B cell (primary cell): ENCODE measurements at regions of chr3 and their contacts with region 1.

Region 1: GRCh38 chr3:152183473-152183872 is 85.3 kb upstream of the MBNL1 start:
- DNase-seq: peak; percentile 76
- ATAC-seq: peak; percentile 80
- H3K4me3 ChIP-seq: peak overlapping the region in 1 of 5 experiments; percentile 11
- H3K4me3 Mint-ChIP-seq: no peak overlapping the region
- H3K27ac ChIP-seq: no peak overlapping the region
- H3K27ac Mint-ChIP-seq: peak overlapping the region; percentile 62
- H3K4me1 ChIP-seq: peaks cover 5 to 9% of the 10 kb centered on the region in 2 donors
- H3K4me1 Mint-ChIP-seq: peaks cover 24% of the 10 kb centered on the region
- H3K27me3 ChIP-seq: no peaks in the 10 kb centered on the region
- H3K27me3 Mint-ChIP-seq: no peaks in the 10 kb centered on the region
- CTCF ChIP-seq: peak; percentile 81

Region 2: DNA sequence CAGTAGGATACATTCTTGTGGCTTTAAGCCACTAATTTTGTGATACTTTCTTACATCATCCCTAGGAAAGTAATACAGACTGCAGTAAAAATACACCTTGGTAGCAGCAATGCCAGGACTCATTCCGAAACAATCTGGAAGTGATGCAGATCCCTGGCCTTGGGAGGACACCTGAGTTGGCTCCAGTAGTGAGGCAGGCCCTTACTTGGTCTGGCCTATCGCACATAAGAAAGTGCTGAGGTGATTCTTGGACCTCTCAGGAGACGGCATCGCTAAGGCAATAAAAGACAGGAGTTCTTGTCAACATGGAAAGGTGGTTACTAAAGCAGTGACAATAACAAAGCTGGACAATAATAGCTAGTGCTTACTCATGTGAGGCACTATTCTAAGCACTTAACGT is 183.5 kb before region 1 on chr3:
- CTCF ChIA-PET with region 1: no interaction called
- POLR2A ChIA-PET with region 1: no interaction called
- intact Hi-C with region 1: no loop called
- DNase-seq: no peak
- ATAC-seq: no peak
- H3K4me3 ChIP-seq: no peak overlapping the region
- H3K4me3 Mint-ChIP-seq: no peak overlapping the region
- H3K27ac ChIP-seq: no peak overlapping the region
- H3K27ac Mint-ChIP-seq: no peak overlapping the region
- H3K4me1 ChIP-seq: no peaks in the 10 kb centered on the region
- H3K4me1 Mint-ChIP-seq: no peaks in the 10 kb centered on the region
- H3K27me3 ChIP-seq: no peaks in the 10 kb centered on the region
- H3K27me3 Mint-ChIP-seq: peaks cover 12% of the 10 kb centered on the region
- CTCF ChIP-seq: no peak

Region 3: DNA sequence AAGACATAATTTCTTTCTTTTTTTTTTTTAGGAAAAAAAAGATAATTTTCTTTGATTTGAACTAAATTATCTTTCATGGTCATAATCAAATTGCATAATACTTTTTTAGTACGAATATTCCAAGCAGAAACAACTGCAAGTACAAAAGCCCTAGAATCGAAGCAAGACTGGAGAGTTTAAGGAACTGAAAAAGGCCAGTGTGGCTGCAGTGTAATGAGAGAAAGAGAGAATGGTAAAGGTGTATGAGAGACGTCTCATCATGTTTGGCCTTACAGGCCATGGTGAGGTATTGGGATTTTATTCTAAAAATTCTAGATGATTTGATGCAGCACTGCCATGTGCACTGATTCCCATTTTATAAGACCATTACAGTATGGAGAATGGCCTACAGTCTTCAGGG is 129.2 kb before region 1 on chr3:
- CTCF ChIA-PET with region 1: no interaction called
- POLR2A ChIA-PET with region 1: no interaction called
- intact Hi-C with region 1: no loop called
- DNase-seq: no peak
- ATAC-seq: no peak
- H3K4me3 ChIP-seq: no peak overlapping the region
- H3K4me3 Mint-ChIP-seq: no peak overlapping the region
- H3K27ac ChIP-seq: no peak overlapping the region
- H3K27ac Mint-ChIP-seq: no peak overlapping the region
- H3K4me1 ChIP-seq: no peaks in the 10 kb centered on the region
- H3K4me1 Mint-ChIP-seq: no peaks in the 10 kb centered on the region
- H3K27me3 ChIP-seq: no peaks in the 10 kb centered on the region
- H3K27me3 Mint-ChIP-seq: peaks cover 3% of the 10 kb centered on the region
- CTCF ChIP-seq: no peak

Region 4: DNA sequence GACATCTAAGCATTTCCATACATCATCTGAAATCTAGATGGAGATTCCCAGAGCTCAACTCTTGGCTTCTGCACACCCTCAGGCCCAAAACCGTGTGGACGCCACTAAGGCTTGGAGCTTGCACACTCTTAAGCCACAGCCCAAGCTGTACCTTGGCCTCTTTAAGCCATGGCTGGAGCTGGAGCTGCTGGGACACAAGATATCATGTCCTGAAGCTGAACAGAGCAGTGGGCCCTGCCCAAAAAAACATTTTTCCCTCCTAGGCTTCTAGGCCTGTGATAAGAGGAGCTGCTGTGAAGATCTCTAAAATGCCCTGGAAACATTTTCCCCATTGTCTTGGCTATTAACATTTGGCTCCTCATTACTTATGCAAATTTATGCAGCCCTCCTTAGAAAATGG is 103.5 kb before region 1 on chr3:
- CTCF ChIA-PET with region 1: no interaction called
- POLR2A ChIA-PET with region 1: no interaction called
- intact Hi-C with region 1: no loop called
- DNase-seq: no peak
- ATAC-seq: no peak
- H3K4me3 ChIP-seq: no peak overlapping the region
- H3K4me3 Mint-ChIP-seq: no peak overlapping the region
- H3K27ac ChIP-seq: no peak overlapping the region
- H3K27ac Mint-ChIP-seq: no peak overlapping the region
- H3K4me1 ChIP-seq: no peaks in the 10 kb centered on the region
- H3K4me1 Mint-ChIP-seq: no peaks in the 10 kb centered on the region
- H3K27me3 ChIP-seq: no peaks in the 10 kb centered on the region
- H3K27me3 Mint-ChIP-seq: no peaks in the 10 kb centered on the region
- CTCF ChIP-seq: no peak

Region 5: GRCh38 chr3:152193673-152194267 is 10.3 kb after region 1 on chr3:
- CTCF ChIA-PET with region 1: interaction called, 45 read pairs
- POLR2A ChIA-PET with region 1: no interaction called
- intact Hi-C with region 1: no loop called
- DNase-seq: peak; percentile 57
- ATAC-seq: peak; percentile 52
- H3K4me3 ChIP-seq: peak overlapping the region; percentile 13 to 73 (median 51)
- H3K4me3 Mint-ChIP-seq: peak overlapping the region; percentile 91
- H3K27ac ChIP-seq: peak overlapping the region; percentile 27 to 59
- H3K27ac Mint-ChIP-seq: peak overlapping the region; percentile 91
- H3K4me1 ChIP-seq: peaks cover 48 to 53% of the 10 kb centered on the region in 2 donors
- H3K4me1 Mint-ChIP-seq: peaks cover 66% of the 10 kb centered on the region
- H3K27me3 ChIP-seq: no peaks in the 10 kb centered on the region
- H3K27me3 Mint-ChIP-seq: no peaks in the 10 kb centered on the region
- CTCF ChIP-seq: no peak

Region 6: DNA sequence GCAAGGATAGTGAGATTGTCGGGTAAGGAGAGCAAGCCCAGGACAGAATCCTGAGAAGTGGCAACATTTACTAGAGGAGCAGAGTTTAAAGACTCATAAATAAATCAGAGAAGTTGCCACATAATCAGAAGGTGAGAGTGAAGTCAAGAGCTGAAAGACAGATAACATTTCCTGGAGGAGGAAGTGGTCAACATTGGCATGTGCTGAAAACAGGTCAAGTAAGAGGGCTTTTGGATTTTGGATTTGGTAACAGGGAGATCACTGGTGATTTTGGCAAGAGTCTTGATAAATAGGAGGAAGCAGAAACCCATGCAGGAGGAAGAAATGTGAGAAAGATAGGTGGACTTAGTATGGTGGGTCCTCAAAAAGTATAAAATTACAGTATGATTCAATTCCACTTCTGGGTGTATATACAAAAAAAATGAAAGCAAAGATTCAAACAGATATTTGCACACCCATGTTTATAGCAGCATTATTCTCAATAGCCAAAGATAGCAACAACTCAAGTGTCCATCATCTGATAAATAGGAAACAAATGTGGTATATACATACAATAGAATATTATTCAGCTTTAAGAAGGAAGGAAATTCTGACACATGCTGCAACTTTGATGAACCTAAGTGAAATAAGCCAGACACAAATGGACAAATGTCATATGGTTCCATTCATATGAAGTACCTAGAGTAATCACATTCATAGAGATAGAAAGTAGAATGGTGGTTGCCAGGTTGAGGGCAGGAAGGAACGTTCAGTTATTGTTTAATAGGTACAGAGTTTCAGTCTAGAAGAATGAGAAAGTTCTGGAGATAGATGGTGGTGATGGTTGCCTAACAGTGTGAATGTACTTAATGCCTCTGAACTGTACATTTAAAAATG is 57.9 kb after region 1 on chr3:
- CTCF ChIA-PET with region 1: interaction called, 31 read pairs
- POLR2A ChIA-PET with region 1: no interaction called
- intact Hi-C with region 1: no loop called
- DNase-seq: peak; percentile 38
- ATAC-seq: no peak
- H3K4me3 ChIP-seq: peak overlapping the region in 1 of 5 experiments; percentile 30
- H3K4me3 Mint-ChIP-seq: peak overlapping the region; percentile 68
- H3K27ac ChIP-seq: peak overlapping the region; percentile 57 to 87
- H3K27ac Mint-ChIP-seq: peak overlapping the region; percentile 84
- H3K4me1 ChIP-seq: peaks cover 38 to 53% of the 10 kb centered on the region in 2 donors
- H3K4me1 Mint-ChIP-seq: peaks cover 68% of the 10 kb centered on the region
- H3K27me3 ChIP-seq: no peaks in the 10 kb centered on the region
- H3K27me3 Mint-ChIP-seq: no peaks in the 10 kb centered on the region
- CTCF ChIP-seq: no peak

Region 7: DNA sequence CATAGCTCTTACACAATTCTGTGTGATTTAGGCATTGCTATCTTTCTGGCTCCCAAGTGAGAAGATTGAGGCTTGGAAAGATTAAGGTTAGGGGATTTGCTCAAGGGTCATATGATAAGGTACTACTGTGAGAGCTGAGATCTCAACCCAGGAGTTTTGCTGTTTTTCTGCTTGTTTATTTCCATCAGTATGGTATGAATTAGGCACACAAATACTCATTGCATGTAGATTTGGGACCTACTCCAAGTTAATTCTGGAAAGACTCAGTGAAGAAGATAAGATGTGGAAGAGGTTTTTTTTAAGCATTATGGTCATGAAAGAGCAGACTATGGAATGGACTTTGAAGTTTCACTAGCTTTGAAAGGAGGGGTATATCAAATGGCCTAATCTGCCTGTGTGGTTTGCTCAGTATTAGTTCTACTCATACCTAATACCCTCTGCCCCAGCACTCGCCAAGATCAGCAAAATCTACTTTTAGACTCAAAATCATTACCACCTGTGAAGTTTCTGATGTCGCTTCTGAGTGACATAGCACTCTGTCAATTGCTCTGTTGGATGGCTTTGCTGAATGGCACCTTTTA is 97.8 kb after region 1 on chr3:
- CTCF ChIA-PET with region 1: interaction called, 51 read pairs
- POLR2A ChIA-PET with region 1: no interaction called
- intact Hi-C with region 1: no loop called
- DNase-seq: no peak
- ATAC-seq: no peak
- H3K4me3 ChIP-seq: peak overlapping the region in 1 of 5 experiments; percentile 5
- H3K4me3 Mint-ChIP-seq: peak overlapping the region; percentile 68
- H3K27ac ChIP-seq: peak overlapping the region in 1 of 2 donors; percentile 73
- H3K27ac Mint-ChIP-seq: peak overlapping the region; percentile 62
- H3K4me1 ChIP-seq: peaks cover 63 to 90% of the 10 kb centered on the region in 2 donors
- H3K4me1 Mint-ChIP-seq: peaks cover 79% of the 10 kb centered on the region
- H3K27me3 ChIP-seq: no peaks in the 10 kb centered on the region
- H3K27me3 Mint-ChIP-seq: no peaks in the 10 kb centered on the region
- CTCF ChIP-seq: no peak

Region 8: DNA sequence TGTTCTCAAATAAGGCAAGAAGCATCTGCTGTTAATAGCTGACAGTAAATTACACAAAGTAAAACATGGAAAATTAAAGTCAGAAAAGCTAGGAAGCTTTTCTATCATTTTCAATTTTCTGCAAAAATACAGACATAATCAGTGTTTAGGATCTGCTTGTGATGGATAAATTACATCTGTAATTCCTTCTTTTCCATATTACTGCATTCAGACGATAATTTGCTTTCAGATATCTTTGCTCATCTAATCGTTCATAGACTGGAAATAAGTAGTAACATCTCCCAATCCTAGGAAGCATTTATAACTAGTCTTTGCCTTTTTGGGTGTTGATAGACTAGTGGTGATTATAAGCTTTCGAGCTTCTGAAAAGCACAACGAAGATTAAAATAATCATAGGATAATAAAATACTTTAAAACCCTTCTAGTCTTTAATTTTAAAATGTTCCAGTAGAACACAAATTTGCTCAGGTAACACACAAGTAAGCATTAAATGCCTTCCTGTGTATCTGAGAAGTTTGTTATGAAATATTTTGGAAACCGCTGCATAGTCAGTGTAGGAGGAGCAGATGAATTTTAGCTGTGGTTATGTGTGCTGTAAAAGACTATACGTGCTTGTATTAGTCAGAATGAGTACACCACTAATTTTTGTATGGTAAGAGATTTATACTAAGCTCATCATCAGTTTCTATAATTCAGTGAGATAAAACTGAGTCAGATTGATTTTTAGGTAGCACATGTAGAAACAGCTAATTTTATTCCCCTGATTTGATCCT is 126.2 kb after region 1 on chr3:
- CTCF ChIA-PET with region 1: interaction called, 16 read pairs
- POLR2A ChIA-PET with region 1: interaction called, 4 read pairs
- intact Hi-C with region 1: no loop called
- DNase-seq: no peak
- ATAC-seq: no peak
- H3K4me3 ChIP-seq: no peak overlapping the region
- H3K4me3 Mint-ChIP-seq: no peak overlapping the region
- H3K27ac ChIP-seq: peak overlapping the region in 1 of 2 donors; percentile 60
- H3K27ac Mint-ChIP-seq: peak overlapping the region; percentile 50
- H3K4me1 ChIP-seq: peaks cover 20 to 23% of the 10 kb centered on the region in 2 donors
- H3K4me1 Mint-ChIP-seq: peaks cover 58% of the 10 kb centered on the region
- H3K27me3 ChIP-seq: no peaks in the 10 kb centered on the region
- H3K27me3 Mint-ChIP-seq: no peaks in the 10 kb centered on the region
- CTCF ChIP-seq: no peak

Region 9: DNA sequence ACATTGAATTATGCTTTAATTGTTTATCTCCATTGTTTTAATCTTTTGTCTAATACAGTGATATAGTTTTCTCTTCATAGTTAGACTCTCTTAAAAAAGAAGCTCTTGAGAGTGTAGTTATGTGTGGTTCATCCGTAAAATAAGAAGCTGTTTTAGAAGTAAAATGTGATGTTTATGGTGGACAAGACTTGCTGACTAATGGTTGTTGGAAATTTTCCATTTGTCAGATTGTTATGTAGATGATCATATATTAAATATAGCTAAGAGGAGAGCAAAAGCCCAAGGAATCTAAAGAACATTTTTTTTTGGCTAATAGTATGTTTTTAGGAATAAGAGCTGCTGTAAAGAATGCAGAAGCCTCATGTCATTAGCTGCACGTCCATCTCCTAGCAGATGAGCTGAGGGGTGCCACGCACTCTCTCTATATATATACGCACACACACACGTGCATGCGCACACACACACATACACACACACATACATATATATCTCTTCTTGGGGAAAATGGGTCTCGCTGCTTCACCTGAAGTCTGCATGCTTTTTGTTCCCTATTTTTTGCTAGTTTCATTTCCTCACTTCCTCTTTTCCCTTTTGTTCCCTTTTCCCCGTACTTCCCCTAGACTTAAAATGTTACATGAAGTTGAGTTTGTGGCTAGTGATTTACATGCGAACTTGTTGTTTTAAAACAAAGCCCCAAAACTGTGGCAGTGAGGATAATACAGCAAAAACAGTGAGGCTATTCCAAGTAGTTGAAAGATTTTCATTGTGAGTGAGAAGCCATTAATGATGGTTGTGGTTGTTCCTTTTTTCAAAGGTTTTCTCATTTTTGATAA is 193.1 kb after region 1 on chr3:
- CTCF ChIA-PET with region 1: interaction called, 3 read pairs
- POLR2A ChIA-PET with region 1: no interaction called
- intact Hi-C with region 1: loop called (anchors 5 kb)
- DNase-seq: peak; percentile 95
- ATAC-seq: peak; percentile 95
- H3K4me3 ChIP-seq: peak overlapping the region in 1 of 5 experiments; percentile 35
- H3K4me3 Mint-ChIP-seq: peak overlapping the region; percentile 59
- H3K27ac ChIP-seq: peak overlapping the region; percentile 67 to 83
- H3K27ac Mint-ChIP-seq: peak overlapping the region; percentile 87
- H3K4me1 ChIP-seq: peaks cover 50 to 70% of the 10 kb centered on the region in 2 donors
- H3K4me1 Mint-ChIP-seq: peaks cover 68% of the 10 kb centered on the region
- H3K27me3 ChIP-seq: no peaks in the 10 kb centered on the region
- H3K27me3 Mint-ChIP-seq: no peaks in the 10 kb centered on the region
- CTCF ChIP-seq: no peak

Region 10: DNA sequence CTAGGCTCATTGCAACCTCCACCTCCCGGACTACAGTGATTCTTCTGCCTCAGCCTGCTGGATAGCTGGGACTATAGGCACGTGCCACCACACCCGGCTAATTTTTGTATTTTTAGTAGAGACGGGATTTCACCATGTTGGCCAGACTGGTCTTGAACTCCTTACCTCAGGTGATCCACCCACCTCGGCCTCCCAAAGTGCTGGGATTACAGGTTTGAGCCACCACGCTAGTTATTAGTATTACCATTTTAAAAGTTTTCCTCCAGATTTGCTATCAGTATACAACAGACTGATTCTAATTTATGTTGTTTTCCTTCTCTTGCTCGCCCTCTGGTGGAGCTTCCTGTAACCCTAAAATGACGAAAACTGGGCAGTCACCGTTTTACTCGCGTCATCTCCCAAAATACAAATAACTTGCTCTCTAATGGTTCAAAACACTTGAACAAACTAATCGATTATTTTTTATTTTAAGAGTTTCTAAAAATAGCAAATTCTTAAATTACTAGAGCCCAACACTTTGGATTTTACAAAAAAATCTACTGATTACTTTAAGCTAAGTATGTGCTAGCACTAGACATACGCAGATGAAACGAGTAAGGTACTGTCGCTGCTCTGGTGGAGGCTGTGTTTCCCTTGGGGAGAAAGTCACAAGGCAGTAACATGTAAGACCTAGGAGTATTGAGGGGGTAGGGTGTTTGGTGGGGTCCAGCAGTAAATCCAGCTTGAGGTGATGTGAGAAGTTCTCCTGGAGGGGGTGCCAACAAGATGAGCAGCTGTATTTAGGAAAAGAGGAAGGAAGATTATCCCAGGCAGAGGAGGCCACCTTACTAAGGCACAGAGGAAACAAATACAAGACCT is 288.6 kb after region 1 on chr3:
- CTCF ChIA-PET with region 1: interaction called, 8 read pairs
- POLR2A ChIA-PET with region 1: no interaction called
- intact Hi-C with region 1: loop called (anchors 1 kb)
- DNase-seq: peak; percentile 86
- ATAC-seq: peak; percentile 82
- H3K4me3 ChIP-seq: peak overlapping the region; percentile 32 to 63 (median 54)
- H3K4me3 Mint-ChIP-seq: peak overlapping the region; percentile 60
- H3K27ac ChIP-seq: peak overlapping the region; percentile 75 to 83
- H3K27ac Mint-ChIP-seq: peak overlapping the region; percentile 84
- H3K4me1 ChIP-seq: peaks cover 12 to 14% of the 10 kb centered on the region in 2 donors
- H3K4me1 Mint-ChIP-seq: peaks cover 21% of the 10 kb centered on the region
- H3K27me3 ChIP-seq: no peaks in the 10 kb centered on the region
- H3K27me3 Mint-ChIP-seq: no peaks in the 10 kb centered on the region
- CTCF ChIP-seq: peak; percentile 89

Region 11: DNA sequence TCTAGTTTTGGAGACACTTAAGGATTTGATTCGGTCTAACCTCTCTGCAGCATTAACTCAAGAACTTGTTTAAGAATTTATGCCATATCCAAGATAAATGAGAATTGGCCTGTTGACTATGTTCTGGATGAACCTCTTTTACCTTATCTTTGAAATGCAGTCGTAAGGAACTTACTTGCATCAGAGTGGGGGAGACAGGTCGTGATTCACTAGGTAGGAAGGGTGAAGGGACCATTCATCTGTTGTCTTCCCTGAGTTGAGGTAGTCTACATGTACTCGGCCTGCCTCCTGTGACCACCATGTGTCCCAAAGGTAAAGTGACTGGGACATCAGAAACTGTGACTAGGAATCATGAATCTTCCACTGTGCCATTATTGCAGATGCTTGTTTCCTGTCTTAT is 403.5 kb after region 1 on chr3:
- CTCF ChIA-PET with region 1: no interaction called
- POLR2A ChIA-PET with region 1: no interaction called
- intact Hi-C with region 1: no loop called
- DNase-seq: no peak
- ATAC-seq: no peak
- H3K4me3 ChIP-seq: no peak overlapping the region
- H3K4me3 Mint-ChIP-seq: no peak overlapping the region
- H3K27ac ChIP-seq: no peak overlapping the region
- H3K27ac Mint-ChIP-seq: no peak overlapping the region
- H3K4me1 ChIP-seq: no peaks in the 10 kb centered on the region
- H3K4me1 Mint-ChIP-seq: no peaks in the 10 kb centered on the region
- H3K27me3 ChIP-seq: peaks cover 0 to 2% (median 0%) of the 10 kb centered on the region in 4 experiments
- H3K27me3 Mint-ChIP-seq: peaks cover 4% of the 10 kb centered on the region
- CTCF ChIP-seq: no peak